Left colon (tissue), 2 donors: ENCODE measurements at regions of chr1 and their contacts with region 1.

Region 1: DNA sequence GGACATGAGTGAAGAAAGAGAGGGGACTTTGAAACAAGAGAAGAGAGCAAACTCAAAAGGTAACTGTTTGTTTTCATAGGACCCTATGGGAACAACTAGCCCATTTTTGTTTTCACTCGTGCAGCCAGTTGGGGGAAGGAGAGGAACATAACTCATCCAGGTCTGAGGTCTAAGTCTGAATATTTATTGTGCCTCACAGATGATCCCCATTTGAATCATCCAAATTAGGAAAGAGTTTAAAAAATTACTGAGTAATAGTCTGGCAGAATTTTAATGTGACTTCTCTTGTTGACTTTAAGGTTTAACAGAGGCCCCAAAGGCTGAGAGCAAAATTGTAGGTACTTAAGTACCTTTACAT is 10.4 kb upstream of the TSPAN2 start:
- DNase-seq: no peak
- ATAC-seq: peak; percentile 17

Region 2: GRCh38 chr1:115052454-115053083 is 47.1 kb before region 1 on chr1:
- intact Hi-C with region 1: loop called in 1 of 2 experiments (anchors 10 kb)
- DNase-seq: peak; percentile 49 to 71
- ATAC-seq: peak; percentile 85

Region 3: GRCh38 chr1:115282807-115283208 is 183.1 kb after region 1 on chr1:
- intact Hi-C with region 1: no loop called
- DNase-seq: peak; percentile 18 to 48
- ATAC-seq: no peak